ENCODE measurements at regions of chr2 and their contacts with region 1.

Region 1: GRCh38 chr2:203759690-203760365 is 53.4 kb downstream of the CD28 start:
- DNase-seq: no peak
- ATAC-seq: no peak
- H3K4me3 Mint-ChIP-seq: no peak overlapping the region
- H3K27ac Mint-ChIP-seq: no peak overlapping the region
- H3K4me1 Mint-ChIP-seq: peaks cover 61% of the 10 kb centered on the region
- H3K27me3 Mint-ChIP-seq: no peaks in the 10 kb centered on the region

Region 2: DNA sequence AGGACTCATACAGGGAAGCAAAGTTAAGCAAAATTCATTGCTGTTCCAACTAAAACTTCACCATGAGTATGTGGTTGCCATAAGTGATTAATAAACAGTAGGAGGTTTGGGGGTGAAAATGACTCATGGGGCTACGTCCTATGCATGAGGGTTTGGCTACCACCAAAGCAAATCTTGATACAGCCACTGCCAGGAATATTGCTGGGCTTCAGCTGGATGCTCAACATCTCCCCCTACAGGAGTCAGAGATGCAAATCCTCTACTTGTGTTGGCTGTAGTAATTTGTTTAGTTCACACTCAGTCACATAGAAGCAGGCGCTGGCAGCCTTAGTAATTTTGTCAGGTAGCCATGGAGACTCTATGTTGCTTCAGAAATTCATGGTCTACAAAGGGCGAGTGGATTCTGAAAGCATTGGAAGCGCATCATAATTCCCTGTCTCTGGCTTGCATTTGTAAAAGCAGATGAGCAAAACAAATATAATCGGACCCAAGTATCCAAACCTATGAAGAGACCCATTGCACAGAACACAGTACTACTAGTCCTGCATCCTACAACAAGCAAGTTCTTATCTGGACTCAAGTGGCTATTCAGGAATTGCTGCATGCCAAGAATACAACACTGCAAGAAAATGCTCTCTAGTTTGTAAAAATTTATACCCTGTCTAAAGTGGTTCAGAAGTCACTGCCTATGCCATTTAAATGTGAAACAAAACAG is 22.6 kb after region 1 on chr2:
- CTCF ChIA-PET with region 1: no interaction called
- POLR2A ChIA-PET with region 1: no interaction called
- intact Hi-C with region 1: loop called in 1 of 2 experiments (anchors 1 kb)
- DNase-seq: peak; percentile 81
- ATAC-seq: peak; percentile 94
- H3K4me3 Mint-ChIP-seq: no peak overlapping the region
- H3K27ac Mint-ChIP-seq: peak overlapping the region; percentile 89
- H3K4me1 Mint-ChIP-seq: peaks cover 52% of the 10 kb centered on the region
- H3K27me3 Mint-ChIP-seq: no peaks in the 10 kb centered on the region

Region 3: GRCh38 chr2:203804070-203804469 is 44.2 kb after region 1 on chr2:
- CTCF ChIA-PET with region 1: interaction called, 3 read pairs
- POLR2A ChIA-PET with region 1: no interaction called
- intact Hi-C with region 1: loop called (anchors 2 kb)
- DNase-seq: peak; percentile 63
- ATAC-seq: peak; percentile 30
- H3K4me3 Mint-ChIP-seq: peak overlapping the region; percentile 17
- H3K27ac Mint-ChIP-seq: peak overlapping the region; percentile 82
- H3K4me1 Mint-ChIP-seq: peaks cover 86% of the 10 kb centered on the region
- H3K27me3 Mint-ChIP-seq: no peaks in the 10 kb centered on the region

Region 4: GRCh38 chr2:203830304-203831055 is 70.7 kb after region 1 on chr2:
- CTCF ChIA-PET with region 1: no interaction called
- POLR2A ChIA-PET with region 1: no interaction called
- intact Hi-C with region 1: loop called in 1 of 2 experiments (anchors 1 kb)
- DNase-seq: peak; percentile 83
- ATAC-seq: peak; percentile 95
- H3K4me3 Mint-ChIP-seq: peak overlapping the region; percentile 42
- H3K27ac Mint-ChIP-seq: peak overlapping the region; percentile 95
- H3K4me1 Mint-ChIP-seq: peaks cover 19% of the 10 kb centered on the region
- H3K27me3 Mint-ChIP-seq: no peaks in the 10 kb centered on the region

Region 5: DNA sequence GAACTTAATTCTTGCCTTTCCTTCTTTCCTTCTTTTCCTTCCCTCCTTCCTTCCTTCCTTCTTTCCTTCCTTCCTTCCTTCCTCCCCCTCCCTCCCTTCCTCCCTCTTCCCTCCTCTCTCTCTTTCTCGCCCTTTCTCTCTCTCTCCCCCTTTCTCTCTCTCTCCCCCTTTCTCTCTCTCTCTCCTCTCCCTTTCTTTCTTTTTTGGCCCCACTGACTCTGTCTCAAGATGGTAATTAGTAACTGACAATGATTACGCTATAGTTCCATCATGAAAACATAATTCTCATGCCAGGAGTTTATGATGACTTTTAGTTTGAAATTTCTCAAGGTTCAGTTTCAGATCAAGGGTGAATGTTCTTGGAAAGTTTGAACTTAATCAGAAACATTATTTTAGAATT is 92.9 kb after region 1 on chr2:
- CTCF ChIA-PET with region 1: no interaction called
- POLR2A ChIA-PET with region 1: interaction called, 13 read pairs
- intact Hi-C with region 1: no loop called
- DNase-seq: no peak
- ATAC-seq: peak; percentile 53
- H3K4me3 Mint-ChIP-seq: peak overlapping the region; percentile 29
- H3K27ac Mint-ChIP-seq: peak overlapping the region; percentile 83
- H3K4me1 Mint-ChIP-seq: peaks cover 65% of the 10 kb centered on the region
- H3K27me3 Mint-ChIP-seq: no peaks in the 10 kb centered on the region

Region 6: GRCh38 chr2:203893401-203893800 is 133.6 kb after region 1 on chr2:
- CTCF ChIA-PET with region 1: no interaction called
- POLR2A ChIA-PET with region 1: no interaction called
- intact Hi-C with region 1: loop called in 1 of 2 experiments (anchors 1 kb)
- DNase-seq: no peak
- ATAC-seq: no peak
- H3K4me3 Mint-ChIP-seq: peak overlapping the region; percentile 23
- H3K27ac Mint-ChIP-seq: peak overlapping the region; percentile 85
- H3K4me1 Mint-ChIP-seq: peaks cover 78% of the 10 kb centered on the region
- H3K27me3 Mint-ChIP-seq: peaks cover 2% of the 10 kb centered on the region